Breast epithelium (tissue), 4 donors: ENCODE measurements at regions of chr4 and their contacts with region 1.

Region 1: DNA sequence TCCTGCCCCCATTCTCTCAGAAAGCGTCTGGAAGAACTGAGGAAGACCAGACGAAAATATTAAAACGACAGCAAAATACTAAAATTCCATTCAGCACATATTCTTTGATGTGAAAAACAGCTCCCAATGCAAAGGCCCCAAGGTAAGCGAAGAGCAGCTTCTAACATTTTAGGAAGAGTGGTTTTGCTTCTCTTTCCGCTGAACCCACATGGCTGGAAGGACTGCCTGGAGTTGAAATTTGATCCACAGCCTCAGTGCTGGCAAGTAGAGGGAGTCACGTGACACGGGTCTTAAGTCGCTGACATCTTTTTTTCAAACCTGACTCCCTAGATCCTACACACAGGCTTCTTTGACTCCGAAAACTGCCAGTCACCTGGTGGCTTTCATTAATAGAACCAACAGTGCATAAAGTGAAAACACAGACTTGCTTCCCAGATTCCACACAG is at the start of gene FAM13A:
- DNase-seq: peak; percentile 74 to 90
- H3K4me3 ChIP-seq: peak within 1 kb of the TSS; percentile 36 to 53 (median 48)
- H3K27ac ChIP-seq: peak within 1 kb of the TSS; percentile 76 to 77
- H3K4me1 ChIP-seq: no peaks in the 10 kb centered on the region
- H3K27me3 ChIP-seq: no peaks in the 10 kb centered on the region
- CTCF ChIP-seq: peak in 1 of 3 donors; percentile 13
- POLR2A ChIP-seq: no peak
- total RNA-seq, gene FAM13A: 55.7 to 170 (median 118) TPM

Region 2: DNA sequence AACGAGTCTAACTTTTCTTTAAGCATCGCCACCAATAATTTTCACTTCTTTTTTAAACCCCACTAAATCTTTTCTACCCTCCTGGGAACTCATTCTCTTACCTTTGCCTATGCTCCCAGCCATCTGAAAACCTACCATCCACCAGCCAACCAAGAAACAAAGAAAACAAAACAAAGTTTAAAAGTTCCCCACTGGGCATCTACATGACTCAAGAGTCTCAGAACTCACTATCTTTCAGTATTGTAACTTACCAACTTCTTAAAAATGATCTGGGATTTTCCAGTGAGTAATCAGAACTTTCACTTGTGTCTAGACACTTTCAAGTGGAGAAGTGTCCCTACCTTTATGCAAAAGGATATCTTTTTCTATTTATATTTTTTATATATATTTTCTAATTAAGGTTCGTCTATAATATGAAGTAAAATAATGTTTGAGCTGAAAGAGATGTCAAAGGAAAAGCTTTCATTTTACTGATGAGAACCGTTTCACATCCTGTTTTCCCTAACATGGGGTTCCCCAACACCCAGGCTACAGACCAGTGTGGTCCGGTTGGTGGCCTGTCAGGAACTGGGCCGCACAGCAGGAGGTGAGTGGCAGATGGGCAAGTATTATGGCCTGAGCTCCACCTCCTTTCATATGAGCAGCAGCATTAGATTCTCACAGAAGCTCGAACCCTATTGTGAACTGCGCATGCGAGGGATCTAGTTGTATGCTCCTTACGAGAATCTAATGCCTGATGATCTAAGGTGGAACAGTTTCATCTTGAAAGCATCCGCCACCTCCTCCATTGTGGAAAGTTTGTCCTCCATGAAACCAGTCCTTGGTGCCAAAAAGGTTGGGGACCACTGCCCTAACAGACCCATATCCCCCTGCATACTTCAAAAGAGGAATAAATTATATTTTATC is 44.5 kb after region 1 on chr4:
- intact Hi-C with region 1: loop called (anchors 10 kb)
- DNase-seq: no peak
- H3K4me3 ChIP-seq: no peak overlapping the region
- H3K27ac ChIP-seq: no peak overlapping the region
- H3K4me1 ChIP-seq: no peaks in the 10 kb centered on the region
- H3K27me3 ChIP-seq: no peaks in the 10 kb centered on the region
- CTCF ChIP-seq: no peak
- POLR2A ChIP-seq: no peak